ENCODE measurements at regions of chr3 and their contacts with region 1.

Region 1: DNA sequence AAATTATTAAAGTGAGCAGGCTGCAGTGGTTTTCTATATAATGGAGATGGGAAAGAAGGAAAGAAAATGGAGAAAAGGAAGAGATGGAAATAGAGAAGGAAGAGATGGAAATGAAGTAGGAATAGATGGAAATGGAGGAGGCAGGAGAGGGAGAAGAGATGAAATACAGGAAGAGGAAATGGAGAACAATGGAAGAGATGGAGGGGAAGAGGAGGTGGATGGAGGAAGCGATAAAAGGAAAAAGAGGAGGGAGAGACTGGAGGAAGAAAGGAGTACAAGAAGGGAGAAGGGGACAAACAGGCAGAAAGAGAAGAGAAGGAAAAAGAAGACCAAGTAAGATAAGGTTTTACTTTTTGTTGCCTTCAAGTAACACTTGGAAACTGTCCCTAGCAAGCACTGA is 67.6 kb downstream of the CLASP2 start:
- DNase-seq: no peak
- ATAC-seq: no peak
- H3K4me3 ChIP-seq: no peak overlapping the region
- H3K4me3 Mint-ChIP-seq: no peak overlapping the region
- H3K27ac ChIP-seq: no peak overlapping the region
- H3K27ac Mint-ChIP-seq: no peak overlapping the region
- H3K4me1 ChIP-seq: peaks cover 0 to 4% of the 10 kb centered on the region in 2 experiments
- H3K4me1 Mint-ChIP-seq: peaks cover 34 to 38% (median 36%) of the 10 kb centered on the region in 3 donors
- H3K27me3 ChIP-seq: no peaks in the 10 kb centered on the region
- H3K27me3 Mint-ChIP-seq: no peaks in the 10 kb centered on the region

Region 2: GRCh38 chr3:33186524-33187367 is 463.7 kb before region 1 on chr3:
- CTCF ChIA-PET with region 1: no interaction called
- POLR2A ChIA-PET with region 1: no interaction called
- DNase-seq: no peak
- ATAC-seq: no peak
- H3K4me3 ChIP-seq: no peak overlapping the region
- H3K4me3 Mint-ChIP-seq: no peak overlapping the region
- H3K27ac ChIP-seq: no peak overlapping the region
- H3K27ac Mint-ChIP-seq: no peak overlapping the region
- H3K4me1 ChIP-seq: no peaks in the 10 kb centered on the region
- H3K4me1 Mint-ChIP-seq: no peaks in the 10 kb centered on the region
- H3K27me3 ChIP-seq: no peaks in the 10 kb centered on the region
- H3K27me3 Mint-ChIP-seq: peaks cover 19% of the 10 kb centered on the region in 2 donors

Region 3: GRCh38 chr3:33575311-33575710 is 75.2 kb before region 1 on chr3:
- CTCF ChIA-PET with region 1: no interaction called
- POLR2A ChIA-PET with region 1: interaction called in 1 of 2 experiments, 12 read pairs
- DNase-seq: no peak
- ATAC-seq: no peak
- H3K4me3 ChIP-seq: no peak overlapping the region
- H3K4me3 Mint-ChIP-seq: no peak overlapping the region
- H3K27ac ChIP-seq: no peak overlapping the region
- H3K27ac Mint-ChIP-seq: no peak overlapping the region
- H3K4me1 ChIP-seq: no peaks in the 10 kb centered on the region
- H3K4me1 Mint-ChIP-seq: no peaks in the 10 kb centered on the region
- H3K27me3 ChIP-seq: no peaks in the 10 kb centered on the region
- H3K27me3 Mint-ChIP-seq: no peaks in the 10 kb centered on the region